ENCODE measurements at regions of chr20 and their contacts with region 1.

Region 1: GRCh38 chr20:32652739-32653526 is 20.8 kb downstream of the C20orf203 start:
- DNase-seq: peak; percentile 94 to 97
- H3K4me3 ChIP-seq: no peak overlapping the region
- H3K4me3 Mint-ChIP-seq: no peak overlapping the region
- H3K27ac Mint-ChIP-seq: no peak overlapping the region
- H3K4me1 ChIP-seq: no peaks in the 10 kb centered on the region
- H3K4me1 Mint-ChIP-seq: no peaks in the 10 kb centered on the region
- H3K27me3 ChIP-seq: no peaks in the 10 kb centered on the region
- H3K27me3 Mint-ChIP-seq: no peaks in the 10 kb centered on the region
- CTCF ChIP-seq: peak; percentile 100

Region 2: GRCh38 chr20:32155017-32155981 is 497.6 kb before region 1 on chr20:
- CTCF ChIA-PET with region 1: interaction called, 3 read pairs
- POLR2A ChIA-PET with region 1: no interaction called
- intact Hi-C with region 1: loop called (anchors 2 kb)
- DNase-seq: peak; percentile 84 to 86
- H3K4me3 ChIP-seq: no peak overlapping the region
- H3K4me3 Mint-ChIP-seq: no peak overlapping the region
- H3K27ac Mint-ChIP-seq: no peak overlapping the region
- H3K4me1 ChIP-seq: peaks cover 6% of the 10 kb centered on the region
- H3K4me1 Mint-ChIP-seq: peaks cover 8% of the 10 kb centered on the region
- H3K27me3 ChIP-seq: no peaks in the 10 kb centered on the region
- H3K27me3 Mint-ChIP-seq: no peaks in the 10 kb centered on the region
- CTCF ChIP-seq: peak; percentile 73 to 92

Region 3: GRCh38 chr20:32445539-32446273 is 207.2 kb before region 1 on chr20:
- CTCF ChIA-PET with region 1: interaction called, 4 read pairs
- POLR2A ChIA-PET with region 1: no interaction called
- intact Hi-C with region 1: loop called (anchors 10 kb)
- DNase-seq: peak; percentile 39 to 53
- H3K4me3 ChIP-seq: no peak overlapping the region
- H3K4me3 Mint-ChIP-seq: no peak overlapping the region
- H3K27ac Mint-ChIP-seq: peak overlapping the region; percentile 9
- H3K4me1 ChIP-seq: 0 out of 2 replicates have a peak, but pooled peaks cover 5% of the 10 kb centered on the region
- H3K4me1 Mint-ChIP-seq: peaks cover 22% of the 10 kb centered on the region
- H3K27me3 ChIP-seq: no peaks in the 10 kb centered on the region
- H3K27me3 Mint-ChIP-seq: no peaks in the 10 kb centered on the region
- CTCF ChIP-seq: no peak

Region 4: GRCh38 chr20:32484958-32485769 is 167.8 kb before region 1 on chr20:
- CTCF ChIA-PET with region 1: interaction called, 4 read pairs
- POLR2A ChIA-PET with region 1: interaction called, 8 read pairs
- intact Hi-C with region 1: loop called (anchors 1 kb)
- DNase-seq: peak; percentile 87 to 88
- H3K4me3 ChIP-seq: peak overlapping the region; percentile 77
- H3K4me3 Mint-ChIP-seq: peak overlapping the region; percentile 93
- H3K27ac Mint-ChIP-seq: peak overlapping the region; percentile 84
- H3K4me1 ChIP-seq: peaks cover 32% of the 10 kb centered on the region
- H3K4me1 Mint-ChIP-seq: peaks cover 25% of the 10 kb centered on the region
- H3K27me3 ChIP-seq: no peaks in the 10 kb centered on the region
- H3K27me3 Mint-ChIP-seq: no peaks in the 10 kb centered on the region
- CTCF ChIP-seq: peak; percentile 98 to 99

Region 5: DNA sequence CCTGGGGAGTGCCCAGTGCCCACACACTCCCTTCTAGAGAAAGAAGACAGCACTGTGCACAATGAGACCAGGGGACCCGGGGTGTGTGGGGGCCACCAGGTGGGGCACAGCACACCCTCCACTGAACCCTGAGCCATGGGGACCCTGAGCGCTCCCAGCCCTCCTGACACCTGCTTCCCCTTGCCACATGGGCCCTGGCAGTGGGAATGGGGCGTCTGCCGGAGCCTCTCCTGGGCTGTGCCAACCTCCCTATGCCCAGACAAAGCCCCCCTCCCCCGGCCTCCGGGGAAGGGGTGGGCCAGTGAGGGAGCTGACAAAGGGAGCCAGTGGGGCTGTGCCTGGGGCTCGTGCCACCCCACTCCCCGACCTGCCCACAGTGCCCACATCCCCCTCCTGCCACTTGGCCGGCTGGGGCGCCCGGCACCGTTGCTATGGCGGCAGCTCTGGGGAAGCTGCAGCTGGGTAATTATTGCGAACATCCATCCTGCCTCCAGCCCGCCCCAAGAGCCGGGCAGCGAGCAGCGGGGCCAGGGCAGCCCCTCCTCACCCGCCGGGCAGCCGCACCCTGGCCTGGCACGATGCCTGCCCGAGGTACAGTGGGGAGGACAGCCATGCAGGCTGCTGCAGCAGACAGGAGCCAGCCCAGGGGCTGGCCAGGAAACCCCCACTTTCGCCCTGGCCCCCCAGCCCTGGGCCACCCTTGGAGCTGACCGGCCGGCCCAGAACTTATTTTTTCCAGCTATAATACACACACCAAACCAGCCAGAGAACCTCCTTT is 25.9 kb before region 1 on chr20:
- CTCF ChIA-PET with region 1: interaction called, 11 read pairs
- POLR2A ChIA-PET with region 1: no interaction called
- intact Hi-C with region 1: loop called (anchors 2 kb)
- DNase-seq: no peak
- H3K4me3 ChIP-seq: no peak overlapping the region
- H3K4me3 Mint-ChIP-seq: no peak overlapping the region
- H3K27ac Mint-ChIP-seq: no peak overlapping the region
- H3K4me1 ChIP-seq: peaks cover 19% of the 10 kb centered on the region
- H3K4me1 Mint-ChIP-seq: peaks cover 16% of the 10 kb centered on the region
- H3K27me3 ChIP-seq: no peaks in the 10 kb centered on the region
- H3K27me3 Mint-ChIP-seq: no peaks in the 10 kb centered on the region
- CTCF ChIP-seq: no peak

Measured in Caco-2 (cell line).